A673 (cell line): ENCODE measurements at regions of chr6 and their contacts with region 1.

Region 1: DNA sequence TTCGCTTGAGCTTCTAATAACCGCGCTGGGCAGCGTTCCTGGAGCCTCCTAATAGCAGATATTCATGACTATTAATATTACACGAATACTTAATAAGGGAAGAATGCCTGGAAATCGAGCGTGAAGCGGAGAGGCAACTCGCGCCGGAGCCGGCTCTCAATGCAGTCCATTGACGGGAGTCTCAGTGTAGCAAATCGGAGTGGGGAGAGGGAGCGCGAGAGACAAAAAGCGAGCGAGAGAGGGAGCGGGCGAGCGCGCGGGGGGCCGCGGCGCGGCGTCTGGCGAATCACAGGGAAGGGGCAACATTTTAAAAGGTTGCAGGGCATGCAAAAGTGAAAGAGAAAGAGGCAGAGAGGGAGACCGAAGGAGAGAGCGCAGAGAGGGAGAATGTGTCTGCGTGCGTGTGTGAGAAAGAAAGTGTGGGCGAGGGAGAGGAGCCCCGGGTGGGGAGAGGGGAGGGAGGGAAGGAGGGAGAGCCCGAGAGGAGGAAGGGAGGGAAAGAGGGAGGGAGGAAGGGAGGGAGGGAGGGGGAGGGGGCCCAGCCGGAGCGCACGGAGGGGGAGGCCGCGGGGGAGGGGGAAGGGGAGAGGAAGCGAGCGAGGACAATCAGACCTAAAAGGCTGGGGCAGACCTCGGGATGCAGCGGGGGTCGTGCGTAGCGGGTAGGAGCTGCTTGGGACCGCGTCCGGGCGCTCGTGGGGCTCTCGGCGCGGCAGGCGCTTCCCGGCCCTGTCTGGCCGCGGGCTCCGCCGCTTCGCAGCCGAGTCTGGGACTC is 2.7 kb downstream of the TFAP2A start:
- DNase-seq: peak; percentile 95
- H3K4me3 ChIP-seq: peak overlapping the region; percentile 75
- H3K27ac ChIP-seq: peak overlapping the region; percentile 83
- H3K4me1 ChIP-seq: peaks cover 40% of the 10 kb centered on the region
- H3K27me3 ChIP-seq: no peaks in the 10 kb centered on the region
- CTCF ChIP-seq: no peak

Region 2: GRCh38 chr6:9250852-9251251 is 1161.3 kb before region 1 on chr6:
- CTCF ChIA-PET with region 1: no interaction called
- POLR2A ChIA-PET with region 1: no interaction called
- intact Hi-C with region 1: loop called (anchors 5 kb)
- DNase-seq: peak; percentile 59
- H3K4me3 ChIP-seq: no peak overlapping the region
- H3K27ac ChIP-seq: no peak overlapping the region
- H3K4me1 ChIP-seq: peaks cover 7% of the 10 kb centered on the region
- H3K27me3 ChIP-seq: no peaks in the 10 kb centered on the region
- CTCF ChIP-seq: peak; percentile 70

Region 3: GRCh38 chr6:10030942-10031537 is 381.1 kb before region 1 on chr6:
- CTCF ChIA-PET with region 1: no interaction called
- POLR2A ChIA-PET with region 1: no interaction called
- intact Hi-C with region 1: loop called (anchors 2 kb)
- DNase-seq: peak; percentile 58
- H3K4me3 ChIP-seq: no peak overlapping the region
- H3K27ac ChIP-seq: no peak overlapping the region
- H3K4me1 ChIP-seq: peaks cover 6% of the 10 kb centered on the region
- H3K27me3 ChIP-seq: no peaks in the 10 kb centered on the region
- CTCF ChIP-seq: peak; percentile 70

Region 4: GRCh38 chr6:10248378-10248891 is 163.7 kb before region 1 on chr6:
- CTCF ChIA-PET with region 1: no interaction called
- POLR2A ChIA-PET with region 1: no interaction called
- intact Hi-C with region 1: loop called (anchors 5 kb)
- DNase-seq: peak; percentile 98
- H3K4me3 ChIP-seq: no peak overlapping the region
- H3K27ac ChIP-seq: no peak overlapping the region
- H3K4me1 ChIP-seq: peaks cover 19% of the 10 kb centered on the region
- H3K27me3 ChIP-seq: no peaks in the 10 kb centered on the region
- CTCF ChIP-seq: peak; percentile 47

Region 5: GRCh38 chr6:10733151-10733715 is 321.1 kb after region 1 on chr6:
- CTCF ChIA-PET with region 1: no interaction called
- POLR2A ChIA-PET with region 1: no interaction called
- intact Hi-C with region 1: no loop called
- DNase-seq: no peak
- H3K4me3 ChIP-seq: no peak overlapping the region
- H3K27ac ChIP-seq: no peak overlapping the region
- H3K4me1 ChIP-seq: no peaks in the 10 kb centered on the region
- H3K27me3 ChIP-seq: no peaks in the 10 kb centered on the region
- CTCF ChIP-seq: no peak